ENCODE measurements at regions of chr3 and their contacts with region 1.

Region 1: DNA sequence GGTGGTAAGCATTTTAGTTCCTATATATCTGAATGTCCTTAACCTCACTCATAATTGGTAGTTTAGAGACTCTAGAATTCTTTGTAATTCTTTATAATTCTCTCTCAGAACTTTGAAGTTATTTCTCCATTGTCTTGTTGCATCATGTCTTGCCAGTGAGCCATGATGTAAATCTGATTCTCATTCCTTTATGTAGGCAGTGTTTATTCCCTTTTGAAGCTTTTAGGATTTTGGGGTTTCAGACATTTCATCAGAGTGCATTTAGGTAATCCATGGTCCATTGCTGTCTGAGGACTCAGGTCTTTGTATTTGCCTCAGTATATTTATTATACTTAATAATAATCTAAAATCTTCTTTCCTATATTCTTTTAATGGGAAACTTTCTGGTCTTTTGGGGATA is 20.6 kb downstream of the CMC1 start:
- DNase-seq: no peak
- ATAC-seq: no peak
- H3K4me3 ChIP-seq: no peak overlapping the region
- H3K4me3 Mint-ChIP-seq: no peak overlapping the region
- H3K27ac ChIP-seq: no peak overlapping the region
- H3K27ac Mint-ChIP-seq: no peak overlapping the region
- H3K4me1 ChIP-seq: no peaks in the 10 kb centered on the region
- H3K4me1 Mint-ChIP-seq: peaks cover 4 to 32% (median 13%) of the 10 kb centered on the region in 7 donors
- H3K27me3 ChIP-seq: no peaks in the 10 kb centered on the region
- H3K27me3 Mint-ChIP-seq: no peaks in the 10 kb centered on the region

Region 2: DNA sequence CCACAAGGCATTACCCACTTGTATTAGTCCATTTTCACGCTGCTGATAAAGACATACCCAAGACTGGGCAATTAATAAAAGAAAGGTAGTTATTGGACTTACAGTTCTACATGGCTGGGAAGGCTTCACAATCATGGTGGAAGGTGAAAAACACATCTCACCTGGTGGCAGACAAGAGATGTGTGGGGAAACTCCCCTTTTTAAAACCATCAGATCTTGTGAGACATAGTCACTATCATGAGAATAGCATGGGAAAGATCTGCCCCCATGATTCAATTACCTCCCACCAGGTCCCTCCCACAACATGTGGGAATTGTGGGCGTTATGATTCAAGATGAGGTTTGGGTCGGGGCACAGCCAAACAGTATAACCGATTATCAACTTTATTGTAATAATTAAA is 37.6 kb before region 1 on chr3:
- CTCF ChIA-PET with region 1: no interaction called
- POLR2A ChIA-PET with region 1: no interaction called
- intact Hi-C with region 1: loop called in 1 of 2 experiments (anchors 5 kb)
- DNase-seq: no peak
- ATAC-seq: no peak
- H3K4me3 ChIP-seq: no peak overlapping the region
- H3K4me3 Mint-ChIP-seq: no peak overlapping the region
- H3K27ac ChIP-seq: no peak overlapping the region
- H3K27ac Mint-ChIP-seq: no peak overlapping the region
- H3K4me1 ChIP-seq: no peaks in the 10 kb centered on the region
- H3K4me1 Mint-ChIP-seq: peaks cover 0 to 5% (median 0%) of the 10 kb centered on the region in 7 donors
- H3K27me3 ChIP-seq: no peaks in the 10 kb centered on the region
- H3K27me3 Mint-ChIP-seq: no peaks in the 10 kb centered on the region

Region 3: GRCh38 chr3:29465836-29466235 is 1203.8 kb after region 1 on chr3:
- CTCF ChIA-PET with region 1: no interaction called
- POLR2A ChIA-PET with region 1: no interaction called
- intact Hi-C with region 1: no loop called
- DNase-seq: no peak
- ATAC-seq: no peak
- H3K4me3 ChIP-seq: no peak overlapping the region
- H3K4me3 Mint-ChIP-seq: no peak overlapping the region
- H3K27ac ChIP-seq: no peak overlapping the region
- H3K27ac Mint-ChIP-seq: no peak overlapping the region
- H3K4me1 ChIP-seq: no peaks in the 10 kb centered on the region
- H3K4me1 Mint-ChIP-seq: peaks cover 0 to 4% (median 0%) of the 10 kb centered on the region in 7 donors
- H3K27me3 ChIP-seq: no peaks in the 10 kb centered on the region
- H3K27me3 Mint-ChIP-seq: peaks cover 0 to 7% (median 0%) of the 10 kb centered on the region in 5 donors